AG04449 (cell line): ENCODE measurements at regions of chr4 and their contacts with region 1.

Region 1: DNA sequence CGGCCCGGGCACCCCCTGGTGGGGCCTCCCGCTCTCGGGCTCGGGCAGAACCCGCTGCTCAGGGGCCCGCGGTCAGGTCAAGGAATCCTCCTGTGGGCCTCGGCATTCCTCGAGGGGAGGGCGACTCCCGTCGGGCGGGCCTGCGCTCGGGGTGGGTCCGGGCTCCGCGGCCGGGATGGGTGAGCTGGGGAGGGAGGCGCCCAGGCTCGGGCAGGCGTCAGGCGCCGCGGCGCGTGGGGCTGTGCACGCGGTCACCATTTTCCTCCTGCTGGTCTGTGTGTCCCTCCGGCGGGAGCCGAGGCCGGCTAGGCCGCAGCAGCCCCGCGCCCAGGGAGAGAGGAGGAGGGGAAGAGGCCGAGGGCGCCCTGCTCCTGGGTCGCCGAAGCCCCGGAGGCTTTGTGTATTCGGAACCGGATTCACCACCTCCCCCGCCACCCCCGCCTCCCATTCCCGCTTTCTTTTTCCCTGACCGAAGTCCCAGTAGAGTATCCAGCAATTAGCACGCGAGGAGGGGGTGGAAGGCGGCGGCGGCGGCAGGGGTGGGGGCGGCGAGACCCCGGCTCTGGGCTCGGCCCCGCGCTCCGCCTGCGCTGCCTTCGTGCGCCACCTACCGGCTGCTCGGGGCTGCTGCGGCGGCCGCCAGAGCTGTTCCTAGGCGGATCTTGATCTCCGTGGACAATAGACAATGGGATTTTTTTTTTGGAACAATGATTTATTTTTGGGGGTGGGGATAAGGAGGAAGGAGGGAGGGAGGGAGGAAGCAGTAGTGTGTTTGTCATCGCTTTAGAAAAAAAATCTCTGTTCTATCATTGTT is 99.0 kb upstream of the MAML3 start:
- DNase-seq: no peak
- H3K4me3 ChIP-seq: peak overlapping the region; percentile 59
- CTCF ChIP-seq: peak; percentile 88

Region 2: DNA sequence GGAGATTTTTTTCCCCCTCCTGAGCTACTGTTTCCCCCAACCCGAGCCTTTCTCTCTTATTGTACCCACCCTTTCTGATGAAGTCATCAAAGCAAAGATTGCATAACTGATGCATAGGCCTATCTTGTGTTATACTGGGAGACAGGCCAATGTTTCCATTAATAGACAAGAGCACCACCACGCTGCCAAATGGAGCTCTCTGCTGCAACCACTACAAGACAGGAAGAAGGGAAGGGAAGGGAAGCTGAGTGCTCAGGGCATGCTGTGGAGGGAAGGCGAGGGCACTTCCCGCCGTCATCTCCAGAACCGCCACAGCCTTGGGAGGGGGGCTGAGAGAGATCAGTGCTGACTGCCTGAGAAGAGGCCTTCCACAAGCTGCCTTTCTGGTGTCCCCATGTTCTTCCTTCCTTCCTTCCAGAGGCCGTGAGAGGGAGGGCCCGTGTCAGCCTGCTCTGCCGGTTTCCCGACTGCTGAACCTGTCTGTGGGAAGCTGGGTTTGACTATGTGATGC is 512.4 kb before region 1 on chr4:
- CTCF ChIA-PET with region 1: interaction called, 17 read pairs
- POLR2A ChIA-PET with region 1: no interaction called
- DNase-seq: peak; percentile 72
- H3K4me3 ChIP-seq: no peak overlapping the region
- CTCF ChIP-seq: peak; percentile 24

Region 3: DNA sequence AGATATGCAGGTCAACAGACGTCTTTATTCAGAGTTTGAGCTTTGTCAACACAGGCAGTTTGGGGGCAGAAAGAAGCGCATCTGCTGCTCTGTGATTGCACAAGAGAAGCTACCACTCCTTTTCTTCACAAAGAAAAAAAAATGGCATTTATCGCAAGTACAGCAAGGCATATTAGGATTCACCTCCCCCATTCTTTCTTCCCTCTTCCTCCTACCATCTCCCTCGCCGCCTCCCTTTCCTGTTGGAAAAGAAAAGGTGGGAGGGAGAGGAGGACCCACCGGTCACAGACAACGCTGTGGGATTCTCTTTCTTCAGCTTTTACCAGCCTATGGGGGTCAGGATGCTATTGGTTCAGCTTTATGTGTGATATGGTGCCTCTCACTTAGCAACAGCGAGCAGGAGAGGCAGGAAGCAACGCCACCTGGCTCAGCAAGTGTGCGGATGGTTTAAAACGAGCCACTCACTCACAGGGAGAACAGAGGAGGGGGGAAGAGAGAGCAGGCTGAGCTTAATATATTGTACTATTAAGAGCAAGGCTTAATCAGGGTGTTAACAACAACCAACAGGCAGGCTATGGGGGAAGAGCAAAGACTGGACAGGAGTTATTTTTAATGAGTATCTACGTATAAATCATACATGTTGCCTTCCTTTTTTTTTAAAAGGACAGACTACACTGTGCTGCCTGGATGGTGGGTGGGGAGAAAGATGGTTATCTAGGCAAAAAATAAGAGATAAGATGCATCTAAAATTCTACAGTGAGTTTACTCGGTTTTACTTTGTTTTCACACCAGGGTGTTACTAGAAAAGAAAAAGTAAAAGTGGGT is 203.7 kb before region 1 on chr4:
- CTCF ChIA-PET with region 1: interaction called, 43 read pairs
- POLR2A ChIA-PET with region 1: no interaction called
- DNase-seq: no peak
- H3K4me3 ChIP-seq: peak overlapping the region; percentile 44
- CTCF ChIP-seq: no peak

Region 4: GRCh38 chr4:140237606-140237986 is 15.4 kb before region 1 on chr4:
- CTCF ChIA-PET with region 1: interaction called, 71 read pairs
- POLR2A ChIA-PET with region 1: no interaction called
- DNase-seq: peak; percentile 80
- H3K4me3 ChIP-seq: peak overlapping the region; percentile 30
- CTCF ChIP-seq: no peak

Region 5: GRCh38 chr4:140281828-140282552 is 29.0 kb after region 1 on chr4:
- CTCF ChIA-PET with region 1: no interaction called
- POLR2A ChIA-PET with region 1: no interaction called
- DNase-seq: no peak
- H3K4me3 ChIP-seq: no peak overlapping the region
- CTCF ChIP-seq: no peak

Region 6: GRCh38 chr4:140296335-140297220 is 43.6 kb after region 1 on chr4:
- CTCF ChIA-PET with region 1: no interaction called
- POLR2A ChIA-PET with region 1: no interaction called
- DNase-seq: peak; percentile 49
- H3K4me3 ChIP-seq: no peak overlapping the region
- CTCF ChIP-seq: no peak